Activated CD8-positive, alpha-beta T cell treated with anti-CD3 and anti-CD28 coated beads for 36 hours (primary cell): ENCODE measurements at regions of chr1 and their contacts with region 1.

Region 1: DNA sequence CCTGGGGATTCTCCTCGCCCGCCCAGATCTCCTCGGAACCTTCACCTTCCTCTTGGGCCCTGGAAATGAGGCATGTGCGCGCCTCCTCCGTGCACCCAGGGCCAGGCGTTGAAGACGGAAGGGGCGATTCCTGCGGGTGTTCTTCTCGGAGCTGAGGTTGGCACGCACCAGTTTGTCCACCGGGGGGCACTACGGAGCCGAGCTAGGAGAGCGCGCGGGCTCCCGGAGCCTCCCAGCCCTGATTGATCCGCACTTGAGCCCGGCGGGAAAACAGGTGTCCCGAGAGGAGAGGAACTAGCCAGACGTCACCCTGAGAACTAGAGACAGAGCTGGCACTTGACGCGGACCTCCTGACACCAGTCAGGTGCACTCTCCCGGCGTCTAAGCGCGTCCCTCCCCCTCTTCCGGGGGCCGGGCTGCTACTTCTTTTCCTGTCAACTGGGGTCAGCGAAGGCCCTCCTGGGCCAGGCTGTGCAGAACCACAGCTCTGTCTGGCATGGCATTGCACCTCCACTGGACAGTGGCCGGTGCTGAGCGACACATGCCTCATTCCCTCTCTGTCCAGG is 18.3 kb upstream of the SERINC2 start:
- DNase-seq: peak; percentile 90
- ATAC-seq: peak; percentile 98
- H3K4me3 Mint-ChIP-seq: peak overlapping the region; percentile 71
- H3K27ac Mint-ChIP-seq: peak overlapping the region; percentile 51
- H3K4me1 Mint-ChIP-seq: peaks cover 9% of the 10 kb centered on the region
- H3K27me3 Mint-ChIP-seq: no peaks in the 10 kb centered on the region
- CTCF ChIP-seq: peak; percentile 89

Region 2: GRCh38 chr1:31182352-31182751 is 212.4 kb before region 1 on chr1:
- CTCF ChIA-PET with region 1: interaction called, 13 read pairs
- POLR2A ChIA-PET with region 1: no interaction called
- intact Hi-C with region 1: no loop called
- DNase-seq: peak; percentile 54
- ATAC-seq: peak; percentile 69
- H3K4me3 Mint-ChIP-seq: no peak overlapping the region
- H3K27ac Mint-ChIP-seq: no peak overlapping the region
- H3K4me1 Mint-ChIP-seq: peaks cover 7% of the 10 kb centered on the region
- H3K27me3 Mint-ChIP-seq: peaks cover 30% of the 10 kb centered on the region
- CTCF ChIP-seq: no peak

Region 3: GRCh38 chr1:31272369-31272768 is 122.3 kb before region 1 on chr1:
- CTCF ChIA-PET with region 1: no interaction called
- POLR2A ChIA-PET with region 1: no interaction called
- intact Hi-C with region 1: no loop called
- DNase-seq: no peak
- ATAC-seq: no peak
- H3K4me3 Mint-ChIP-seq: no peak overlapping the region
- H3K27ac Mint-ChIP-seq: no peak overlapping the region
- H3K4me1 Mint-ChIP-seq: peaks cover 5% of the 10 kb centered on the region
- H3K27me3 Mint-ChIP-seq: no peaks in the 10 kb centered on the region
- CTCF ChIP-seq: no peak

Region 4: DNA sequence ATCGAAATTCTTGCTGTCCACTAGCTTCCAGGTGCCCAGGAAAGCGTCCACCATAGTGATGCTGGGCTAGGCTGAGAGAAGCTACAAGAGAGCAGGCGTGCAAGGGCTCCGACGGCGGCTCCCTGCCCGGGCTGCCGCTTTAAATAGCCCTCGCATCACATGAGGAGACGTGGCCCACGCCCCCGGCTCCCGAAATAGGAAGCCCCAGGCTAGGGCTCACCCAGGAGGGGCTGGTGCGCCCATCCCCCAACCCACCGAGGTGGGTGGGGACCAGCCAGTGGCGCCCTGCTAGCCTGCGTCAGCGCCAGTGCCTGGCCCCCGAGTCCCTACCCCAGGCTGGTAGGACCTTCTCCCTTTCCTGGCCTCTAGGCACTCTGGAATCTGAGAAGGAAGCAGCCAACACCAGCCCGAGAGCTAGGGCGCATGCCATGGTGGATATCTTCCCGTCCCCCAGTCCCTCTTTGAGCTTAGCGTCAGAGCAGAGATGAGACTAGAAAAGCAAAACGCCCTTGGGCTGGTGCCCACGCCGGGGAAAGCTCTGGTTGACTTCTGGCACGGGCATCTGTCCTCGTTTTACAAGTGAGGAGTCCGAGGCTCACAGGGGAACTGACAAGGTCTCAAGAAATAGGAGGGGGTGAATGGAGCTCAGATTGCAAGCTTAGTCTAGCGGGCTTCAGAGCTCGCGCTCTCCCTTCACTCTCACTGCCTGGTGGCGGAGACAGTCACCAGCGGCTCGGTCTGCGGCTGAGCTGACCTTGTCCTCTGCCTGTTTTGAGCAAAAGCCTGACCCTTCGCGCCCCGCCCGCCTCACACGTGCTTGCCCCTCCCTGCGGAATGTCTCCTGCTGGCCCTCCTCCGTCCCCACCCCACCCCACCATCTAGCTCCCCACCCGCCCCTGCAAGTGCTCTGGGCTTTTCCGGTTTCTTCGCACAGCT is 21.5 kb before region 1 on chr1 and contains the start of gene FABP3:
- CTCF ChIA-PET with region 1: interaction called, 33 read pairs
- POLR2A ChIA-PET with region 1: no interaction called
- intact Hi-C with region 1: no loop called
- DNase-seq: peak; percentile 55
- ATAC-seq: peak; percentile 73
- H3K4me3 Mint-ChIP-seq: peak within 1 kb of the TSS; percentile 67
- H3K27ac Mint-ChIP-seq: peak within 1 kb of the TSS; percentile 69
- H3K4me1 Mint-ChIP-seq: peaks cover 9% of the 10 kb centered on the region
- H3K27me3 Mint-ChIP-seq: no peaks in the 10 kb centered on the region
- CTCF ChIP-seq: no peak
- total RNA-seq, gene FABP3: 0.65 TPM in 1 of 2 experiments, not detected in the other

Region 5: DNA sequence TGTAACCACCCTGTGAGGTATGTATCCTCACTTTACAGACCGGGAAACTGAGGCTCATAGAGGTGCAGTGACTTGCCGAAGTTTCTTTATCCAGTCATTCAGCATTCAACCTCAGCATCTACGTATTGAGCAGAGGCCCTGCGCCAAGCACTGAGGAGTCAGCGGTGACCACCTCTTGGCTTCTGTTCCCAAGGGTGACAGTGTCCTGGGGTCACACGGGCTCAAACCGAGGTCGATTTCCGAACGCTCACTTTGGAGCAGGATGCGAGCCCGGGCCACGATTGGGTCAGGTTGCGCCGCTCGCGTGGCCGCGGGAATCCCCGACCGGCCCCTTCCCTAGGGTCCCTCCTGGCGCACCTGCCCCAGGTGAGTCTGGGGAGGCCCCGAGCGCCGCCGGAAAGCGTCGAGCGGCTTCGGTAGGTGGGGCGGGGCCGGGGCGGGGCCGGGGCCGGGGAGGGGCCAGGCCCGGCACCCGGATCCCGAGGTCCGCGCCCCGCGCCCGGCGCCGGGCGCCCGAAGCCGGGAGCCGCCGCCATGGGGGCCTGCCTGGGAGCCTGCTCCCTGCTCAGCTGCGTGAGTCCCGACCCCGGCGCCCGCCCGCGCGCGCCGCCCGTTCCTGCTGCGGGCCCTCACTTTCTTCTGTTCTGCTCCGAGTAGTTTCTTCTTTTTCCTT is 18.2 kb after region 1 on chr1 and contains the start of gene SERINC2:
- CTCF ChIA-PET with region 1: interaction called, 96 read pairs
- POLR2A ChIA-PET with region 1: no interaction called
- intact Hi-C with region 1: no loop called
- DNase-seq: peak; percentile 4
- ATAC-seq: peak; percentile 76
- H3K4me3 Mint-ChIP-seq: peak within 1 kb of the TSS; percentile 67
- H3K27ac Mint-ChIP-seq: no peak within 1 kb of the TSS
- H3K4me1 Mint-ChIP-seq: peaks cover 3% of the 10 kb centered on the region
- H3K27me3 Mint-ChIP-seq: peaks cover 50% of the 10 kb centered on the region
- CTCF ChIP-seq: no peak
- total RNA-seq, gene SERINC2: 0.16 TPM in 1 of 2 experiments, not detected in the other

Region 6: GRCh38 chr1:31422505-31423319 is 28.0 kb after region 1 on chr1:
- CTCF ChIA-PET with region 1: interaction called, 96 read pairs
- POLR2A ChIA-PET with region 1: interaction called, 3 read pairs
- intact Hi-C with region 1: no loop called
- DNase-seq: peak; percentile 82
- ATAC-seq: peak; percentile 91
- H3K4me3 Mint-ChIP-seq: no peak overlapping the region
- H3K27ac Mint-ChIP-seq: no peak overlapping the region
- H3K4me1 Mint-ChIP-seq: no peaks in the 10 kb centered on the region
- H3K27me3 Mint-ChIP-seq: peaks cover 13% of the 10 kb centered on the region
- CTCF ChIP-seq: peak; percentile 98

Region 7: DNA sequence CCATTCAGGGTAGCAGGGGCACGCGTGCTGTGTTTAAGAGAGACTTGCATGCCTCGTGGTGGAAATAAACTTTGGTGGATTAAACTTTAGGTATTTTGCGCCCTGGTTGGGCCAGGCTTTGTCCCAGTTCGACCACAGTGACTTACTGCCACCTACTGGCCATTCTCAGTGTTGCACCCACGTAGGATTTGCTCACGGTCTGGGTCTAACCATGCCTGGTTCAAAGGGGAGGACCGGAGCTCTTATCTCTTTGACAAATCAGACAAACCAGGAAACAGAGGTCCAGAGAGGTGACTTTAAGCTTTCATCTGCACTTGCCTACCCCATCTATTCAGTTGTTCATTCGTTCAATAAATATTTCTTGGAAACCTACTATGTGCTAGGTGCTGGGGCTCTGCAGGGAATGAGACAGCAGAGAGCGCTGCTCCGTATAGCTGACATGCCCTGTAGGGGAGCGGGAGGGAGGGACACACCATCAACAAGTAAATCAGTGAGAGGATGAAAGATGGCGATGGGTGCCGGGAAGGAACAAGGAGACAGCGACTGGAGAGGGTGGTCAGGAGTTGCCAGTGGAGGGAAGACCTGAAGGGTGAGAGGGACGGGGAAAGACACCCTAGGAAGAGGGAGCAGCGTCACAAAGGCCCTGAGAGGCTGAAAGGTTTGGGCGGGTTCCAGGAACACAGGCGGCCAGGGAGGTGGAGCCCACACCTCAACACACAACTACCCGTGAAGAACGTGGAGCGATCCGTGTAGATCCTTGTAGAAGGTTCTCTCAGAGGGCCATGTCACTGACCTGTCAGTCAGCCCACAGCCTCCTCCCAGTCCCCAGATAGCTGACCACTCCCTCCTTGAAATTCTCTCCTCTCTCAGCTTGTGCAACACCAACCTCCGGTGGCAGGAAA is 154.4 kb after region 1 on chr1:
- CTCF ChIA-PET with region 1: interaction called, 25 read pairs
- POLR2A ChIA-PET with region 1: no interaction called
- intact Hi-C with region 1: loop called (anchors 10 kb)
- DNase-seq: peak; percentile 94
- ATAC-seq: peak; percentile 97
- H3K4me3 Mint-ChIP-seq: peak overlapping the region; percentile 25
- H3K27ac Mint-ChIP-seq: no peak overlapping the region
- H3K4me1 Mint-ChIP-seq: peaks cover 10% of the 10 kb centered on the region
- H3K27me3 Mint-ChIP-seq: peaks cover 10% of the 10 kb centered on the region
- CTCF ChIP-seq: peak; percentile 92